Naive thymus-derived CD4-positive, alpha-beta T cell (primary cell): ENCODE measurements at regions of chr12 and their contacts with region 1.

Region 1: GRCh38 chr12:104680066-104680465 is 223.3 kb downstream of the CHST11 start:
- DNase-seq: peak in 7 of 9 donors; percentile 15 to 51 (median 30)
- ATAC-seq: peak; percentile 44
- H3K4me3 ChIP-seq: no peak overlapping the region
- H3K4me3 Mint-ChIP-seq: peak overlapping the region in 3 of 10 donors; percentile 16 to 36 (median 26)
- H3K27ac ChIP-seq: no peak overlapping the region
- H3K27ac Mint-ChIP-seq: peak overlapping the region in 3 of 9 donors; percentile 15 to 80 (median 26)
- H3K4me1 ChIP-seq: peaks cover 25 to 46% of the 10 kb centered on the region in 2 donors
- H3K4me1 Mint-ChIP-seq: peaks cover 36 to 80% (median 46%) of the 10 kb centered on the region in 7 donors
- H3K27me3 ChIP-seq: no peaks in the 10 kb centered on the region
- H3K27me3 Mint-ChIP-seq: no peaks in the 10 kb centered on the region

Region 2: GRCh38 chr12:104653730-104654664 is 26.1 kb before region 1 on chr12:
- CTCF ChIA-PET with region 1: interaction called, 4 read pairs
- POLR2A ChIA-PET with region 1: no interaction called
- intact Hi-C with region 1: loop called in 1 of 2 experiments (anchors 1 kb)
- DNase-seq: peak in 4 of 9 donors; percentile 14 to 25 (median 18)
- ATAC-seq: no peak
- H3K4me3 ChIP-seq: no peak overlapping the region
- H3K4me3 Mint-ChIP-seq: no peak overlapping the region
- H3K27ac ChIP-seq: no peak overlapping the region
- H3K27ac Mint-ChIP-seq: peak overlapping the region in 4 of 9 donors; percentile 17 to 72 (median 34)
- H3K4me1 ChIP-seq: peaks cover 0 to 5% of the 10 kb centered on the region in 2 donors
- H3K4me1 Mint-ChIP-seq: peaks cover 8 to 53% (median 31%) of the 10 kb centered on the region in 7 donors
- H3K27me3 ChIP-seq: no peaks in the 10 kb centered on the region
- H3K27me3 Mint-ChIP-seq: no peaks in the 10 kb centered on the region

Region 3: DNA sequence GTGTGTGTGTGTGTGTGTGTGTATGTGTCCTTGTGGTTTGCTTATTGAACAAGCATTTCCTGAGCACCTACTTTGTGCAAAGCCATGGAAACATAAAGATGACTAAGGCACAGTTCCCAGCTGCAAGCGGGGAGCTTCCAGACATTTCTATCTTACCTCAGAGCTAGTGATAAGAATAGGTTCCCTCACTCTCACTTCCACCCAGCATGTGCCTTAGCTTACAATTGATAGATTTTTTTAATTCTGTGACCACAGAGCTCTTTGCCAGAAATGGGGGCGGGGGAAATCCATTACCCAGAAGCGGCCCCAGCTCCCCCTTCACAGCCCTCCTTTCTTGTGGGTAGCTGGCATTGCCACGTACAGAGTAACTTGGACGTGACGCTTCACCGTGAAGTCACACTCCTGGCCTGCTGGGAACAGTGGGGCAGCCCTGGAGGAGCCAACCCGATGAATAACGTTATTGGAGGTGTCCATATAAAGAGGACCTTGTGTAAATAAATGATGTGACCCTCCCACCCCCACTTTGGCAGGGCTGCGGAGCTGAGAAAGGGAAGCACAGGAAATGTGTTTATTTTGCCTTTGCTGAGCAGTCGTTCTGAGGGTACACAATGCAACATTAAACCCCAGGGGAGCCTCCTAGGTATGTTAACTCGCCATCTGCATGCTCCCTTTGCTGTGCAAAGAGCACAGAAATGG is 15.5 kb after region 1 on chr12:
- CTCF ChIA-PET with region 1: no interaction called
- POLR2A ChIA-PET with region 1: no interaction called
- intact Hi-C with region 1: loop called in 1 of 2 experiments (anchors 1 kb)
- DNase-seq: peak; percentile 40 to 80 (median 67)
- ATAC-seq: peak; percentile 95
- H3K4me3 ChIP-seq: no peak overlapping the region
- H3K4me3 Mint-ChIP-seq: peak overlapping the region in 8 of 10 donors; percentile 39 to 71 (median 56)
- H3K27ac ChIP-seq: no peak overlapping the region
- H3K27ac Mint-ChIP-seq: peak overlapping the region in 8 of 9 donors; percentile 13 to 88 (median 62)
- H3K4me1 ChIP-seq: peaks cover 27 to 37% of the 10 kb centered on the region in 2 donors
- H3K4me1 Mint-ChIP-seq: peaks cover 41 to 79% (median 50%) of the 10 kb centered on the region in 7 donors
- H3K27me3 ChIP-seq: no peaks in the 10 kb centered on the region
- H3K27me3 Mint-ChIP-seq: no peaks in the 10 kb centered on the region

Region 4: DNA sequence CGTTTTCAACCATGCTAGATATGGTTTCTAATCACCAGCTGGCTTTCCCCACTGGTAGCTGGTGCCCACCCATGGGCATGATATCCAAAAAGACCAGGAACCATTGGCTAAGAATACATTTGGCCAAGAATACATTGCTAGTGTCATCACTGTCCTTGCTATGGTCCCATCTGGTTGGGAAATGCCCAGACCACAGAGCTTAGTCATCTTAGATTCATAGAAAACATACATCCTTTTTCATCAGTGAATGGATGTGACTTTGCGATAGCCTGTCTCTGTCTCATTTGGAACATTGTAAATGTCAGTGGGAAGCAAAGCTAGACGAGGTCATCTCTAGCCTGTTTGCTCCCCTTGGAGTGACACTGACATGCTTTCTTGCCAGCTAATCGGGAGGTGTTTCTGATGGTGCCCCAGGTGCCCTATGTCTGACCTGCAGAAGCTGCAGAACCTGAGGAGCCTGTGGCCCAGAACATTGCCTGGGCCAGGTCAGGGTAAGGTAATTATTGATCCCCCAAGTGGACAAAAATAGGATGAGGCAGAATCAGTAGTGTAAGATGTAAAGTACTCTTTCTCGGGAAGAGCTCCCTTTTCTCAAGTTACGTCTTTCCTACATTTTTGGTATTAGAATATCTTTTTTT is 83.2 kb after region 1 on chr12:
- CTCF ChIA-PET with region 1: no interaction called
- POLR2A ChIA-PET with region 1: no interaction called
- intact Hi-C with region 1: loop called in 1 of 2 experiments (anchors 5 kb)
- DNase-seq: no peak
- ATAC-seq: peak; percentile 69
- H3K4me3 ChIP-seq: no peak overlapping the region
- H3K4me3 Mint-ChIP-seq: peak overlapping the region in 2 of 10 donors; percentile 3 to 64
- H3K27ac ChIP-seq: no peak overlapping the region
- H3K27ac Mint-ChIP-seq: peak overlapping the region in 2 of 9 donors; percentile 13 to 61
- H3K4me1 ChIP-seq: peaks cover 0 to 11% of the 10 kb centered on the region in 2 donors
- H3K4me1 Mint-ChIP-seq: peaks cover 17 to 46% (median 22%) of the 10 kb centered on the region in 7 donors
- H3K27me3 ChIP-seq: no peaks in the 10 kb centered on the region
- H3K27me3 Mint-ChIP-seq: no peaks in the 10 kb centered on the region

Region 5: DNA sequence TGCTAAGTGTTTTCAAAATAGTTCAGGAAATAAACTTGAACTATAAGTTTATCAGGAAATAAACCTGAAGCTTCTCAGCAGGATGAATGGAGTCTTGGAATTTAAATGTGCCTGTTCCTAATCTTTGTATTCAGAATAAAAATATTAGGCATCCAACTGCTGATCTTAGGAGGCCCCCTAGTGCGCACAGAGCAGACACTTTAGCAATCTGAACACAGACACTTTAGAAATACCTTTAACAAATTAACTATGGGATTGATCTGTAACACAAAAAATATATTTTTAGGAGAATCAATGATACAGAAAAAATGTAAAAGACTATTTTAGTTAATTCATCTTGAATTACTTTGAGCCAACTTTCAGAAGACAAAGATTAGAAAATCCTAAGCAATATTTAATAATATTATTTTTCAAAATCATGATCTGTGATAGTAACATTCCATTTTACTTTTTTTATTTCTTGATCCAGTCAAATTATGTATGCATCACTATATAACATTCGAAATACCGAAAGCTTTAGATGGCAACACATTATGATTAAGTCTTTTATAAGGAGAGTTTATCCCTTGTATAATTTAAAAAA is 197.1 kb after region 1 on chr12:
- CTCF ChIA-PET with region 1: no interaction called
- POLR2A ChIA-PET with region 1: no interaction called
- intact Hi-C with region 1: loop called (anchors 1 kb)
- DNase-seq: peak in 7 of 9 donors; percentile 5 to 52 (median 29)
- ATAC-seq: peak; percentile 56
- H3K4me3 ChIP-seq: no peak overlapping the region
- H3K4me3 Mint-ChIP-seq: no peak overlapping the region
- H3K27ac ChIP-seq: no peak overlapping the region
- H3K27ac Mint-ChIP-seq: no peak overlapping the region
- H3K4me1 ChIP-seq: no peaks in the 10 kb centered on the region
- H3K4me1 Mint-ChIP-seq: peaks cover 0 to 9% (median 0%) of the 10 kb centered on the region in 7 donors
- H3K27me3 ChIP-seq: no peaks in the 10 kb centered on the region
- H3K27me3 Mint-ChIP-seq: peaks cover 0 to 12% (median 0%) of the 10 kb centered on the region in 5 donors